ENCODE measurements at regions of chr15 and their contacts with region 1.

Region 1: GRCh38 chr15:78927077-78927784 is 17.6 kb downstream of the CTSH start:
- DNase-seq: no peak
- H3K4me3 Mint-ChIP-seq: no peak overlapping the region
- H3K27ac Mint-ChIP-seq: no peak overlapping the region
- H3K4me1 Mint-ChIP-seq: peaks cover 10% of the 10 kb centered on the region
- H3K27me3 Mint-ChIP-seq: no peaks in the 10 kb centered on the region

Region 2: DNA sequence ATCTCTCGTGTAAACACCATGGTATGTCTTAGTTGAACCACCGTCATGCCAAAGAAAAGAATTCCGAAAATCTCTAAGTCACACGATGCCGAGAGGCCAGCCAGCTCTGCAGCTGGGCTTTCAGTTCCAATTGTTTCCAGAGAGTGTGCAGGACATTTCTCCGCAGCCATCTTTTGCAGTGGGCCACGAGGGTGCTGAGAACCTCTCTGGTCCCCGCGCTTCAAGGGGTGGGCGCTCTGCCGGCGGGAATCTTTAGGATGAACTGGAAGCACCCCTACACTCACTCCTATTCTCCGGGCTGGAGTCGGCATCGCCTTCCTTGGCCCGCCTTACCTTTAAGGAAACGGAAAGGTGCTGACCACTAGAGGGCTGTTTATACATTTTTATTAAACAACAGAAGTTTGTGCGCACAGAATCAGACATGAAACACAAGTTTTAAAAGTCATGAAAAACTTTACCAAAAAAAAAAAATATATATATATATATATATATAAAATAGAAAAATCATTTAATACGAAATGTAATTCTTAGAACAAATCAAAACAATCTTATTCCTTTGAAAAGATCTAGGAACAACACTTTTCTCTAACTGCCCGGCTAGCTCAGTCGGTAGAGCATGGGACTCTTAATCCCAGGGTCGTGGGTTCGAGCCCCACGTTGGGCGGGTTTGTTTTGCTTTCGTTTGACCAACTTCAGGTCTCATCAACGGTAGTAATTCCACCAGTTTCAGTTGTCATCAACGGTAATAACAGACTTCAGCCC is 67.1 kb before region 1 on chr15:
- CTCF ChIA-PET with region 1: no interaction called
- POLR2A ChIA-PET with region 1: no interaction called
- DNase-seq: peak; percentile 80
- H3K4me3 Mint-ChIP-seq: peak overlapping the region; percentile 66
- H3K27ac Mint-ChIP-seq: peak overlapping the region; percentile 69
- H3K4me1 Mint-ChIP-seq: peaks cover 7% of the 10 kb centered on the region
- H3K27me3 Mint-ChIP-seq: no peaks in the 10 kb centered on the region

Region 3: GRCh38 chr15:78937132-78937739 is 10.0 kb after region 1 on chr15:
- CTCF ChIA-PET with region 1: no interaction called
- POLR2A ChIA-PET with region 1: interaction called, 12 read pairs
- DNase-seq: peak; percentile 68
- H3K4me3 Mint-ChIP-seq: peak overlapping the region; percentile 77
- H3K27ac Mint-ChIP-seq: peak overlapping the region; percentile 90
- H3K4me1 Mint-ChIP-seq: peaks cover 74% of the 10 kb centered on the region
- H3K27me3 Mint-ChIP-seq: no peaks in the 10 kb centered on the region

Measured in activated CD4-positive, alpha-beta memory T cell treated with anti-CD3 and anti-CD28 coated beads, Interleukin-2, amount 10 ng/mL, durations not matched to agents 7 days and 5 days (primary cell).